ENCODE measurements at regions of chr20 and their contacts with region 1.

Region 1: GRCh38 chr20:45971675-45972499 is at the start of gene ZNF335:
- DNase-seq: peak; percentile 97 to 99
- ATAC-seq: peak; percentile 90 to 92 (median 92)
- H3K4me3 ChIP-seq: peak within 1 kb of the TSS; percentile 93
- H3K27ac ChIP-seq: peak within 1 kb of the TSS; percentile 97
- H3K4me1 ChIP-seq: peaks cover 27% of the 10 kb centered on the region
- H3K27me3 ChIP-seq: no peaks in the 10 kb centered on the region
- CTCF ChIP-seq: peak; percentile 49
- total RNA-seq, gene ZNF335: 10.2 to 11.5 (median 10.9) TPM

Region 2: GRCh38 chr20:45902199-45902701 is 69.6 kb before region 1 on chr20:
- intact Hi-C with region 1: no loop called
- DNase-seq: peak in 1 of 2 donors; percentile 36
- ATAC-seq: no peak
- H3K4me3 ChIP-seq: no peak overlapping the region
- H3K27ac ChIP-seq: no peak overlapping the region
- H3K4me1 ChIP-seq: no peaks in the 10 kb centered on the region
- H3K27me3 ChIP-seq: no peaks in the 10 kb centered on the region
- CTCF ChIP-seq: no peak

Region 3: GRCh38 chr20:46083101-46083500 is 111.2 kb after region 1 on chr20:
- intact Hi-C with region 1: loop called in 1 of 2 experiments (anchors 5 kb)
- DNase-seq: no peak
- ATAC-seq: no peak
- H3K4me3 ChIP-seq: no peak overlapping the region
- H3K27ac ChIP-seq: no peak overlapping the region
- H3K4me1 ChIP-seq: peaks cover 85% of the 10 kb centered on the region
- H3K27me3 ChIP-seq: no peaks in the 10 kb centered on the region
- CTCF ChIP-seq: no peak

Measured in psoas muscle (tissue), 8 donors.